ENCODE measurements at regions of chr14 and their contacts with region 1.

Region 1: GRCh38 chr14:74860906-74861733 is 14.8 kb downstream of the PROX2 start:
- DNase-seq: peak; percentile 74 to 82
- ATAC-seq: peak; percentile 81 to 92
- H3K4me3 ChIP-seq: no peak overlapping the region
- H3K27ac ChIP-seq: no peak overlapping the region
- H3K4me1 ChIP-seq: no peaks in the 10 kb centered on the region
- CTCF ChIP-seq: peak; percentile 87
- EP300 ChIP-seq: no peak
- POLR2A ChIP-seq: no peak
- RAD21 ChIP-seq: peak; percentile 82 to 91

Region 2: DNA sequence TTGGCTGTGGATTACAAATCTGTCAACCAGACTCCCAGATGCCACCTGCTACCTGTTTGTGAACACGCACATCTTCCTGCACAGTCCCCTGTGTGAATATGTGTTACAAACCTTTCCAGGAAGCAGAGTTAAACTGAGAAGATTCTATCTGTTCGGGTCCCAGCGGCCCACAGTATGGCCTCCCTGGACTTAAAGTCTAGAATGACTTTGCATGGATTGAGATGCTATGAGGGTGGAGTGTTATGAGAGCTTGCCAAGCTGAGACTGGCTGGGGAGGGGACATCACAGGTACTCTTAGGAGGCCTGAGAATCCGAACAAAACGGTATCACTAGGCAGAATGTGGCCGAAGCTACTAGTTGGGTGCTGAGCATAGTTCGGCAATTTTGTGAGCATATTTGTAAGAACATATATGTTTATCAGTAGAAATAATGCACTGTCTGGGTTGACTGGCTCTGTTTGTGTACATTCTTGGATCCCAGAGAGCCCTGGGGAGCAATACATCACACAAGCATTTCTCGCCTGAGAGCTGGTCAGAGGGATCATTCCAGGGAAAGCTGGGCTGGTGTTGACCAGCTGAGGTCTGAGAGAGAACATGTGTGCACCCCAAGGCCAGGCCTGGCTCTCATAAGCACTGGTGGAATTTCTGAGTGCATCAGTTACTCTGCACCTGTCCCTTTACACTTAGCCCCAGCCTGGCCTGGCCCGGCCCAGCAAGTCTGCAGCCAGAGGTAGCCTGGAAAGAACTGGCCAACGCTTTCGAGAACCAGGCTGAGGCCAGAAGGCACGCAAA is 219.3 kb before region 1 on chr14:
- CTCF ChIA-PET with region 1: no interaction called
- POLR2A ChIA-PET with region 1: no interaction called
- DNase-seq: no peak
- ATAC-seq: peak; percentile 10 to 33; a peak in 4 of 6 replicates
- H3K4me3 ChIP-seq: no peak overlapping the region
- H3K27ac ChIP-seq: no peak overlapping the region
- H3K4me1 ChIP-seq: no peaks in the 10 kb centered on the region
- CTCF ChIP-seq: no peak
- EP300 ChIP-seq: no peak
- POLR2A ChIP-seq: no peak
- RAD21 ChIP-seq: no peak

Region 3: GRCh38 chr14:74881431-74882361 is 20.6 kb after region 1 on chr14 and contains the start of gene DLST:
- CTCF ChIA-PET with region 1: interaction called, 339 read pairs
- POLR2A ChIA-PET with region 1: no interaction called
- DNase-seq: peak; percentile 90 to 92
- ATAC-seq: peak; percentile 98
- H3K4me3 ChIP-seq: peak within 1 kb of the TSS; percentile 100
- H3K27ac ChIP-seq: peak within 1 kb of the TSS; percentile 94 to 99
- H3K4me1 ChIP-seq: peaks cover 50% of the 10 kb centered on the region
- CTCF ChIP-seq: no peak
- EP300 ChIP-seq: no peak
- POLR2A ChIP-seq: no peak; the same call in none of the 2 replicates
- RAD21 ChIP-seq: no peak
- polyA plus RNA-seq, gene DLST: 129 and 137 TPM in 2 replicates

Region 4: GRCh38 chr14:74888164-74889158 is 27.3 kb after region 1 on chr14:
- CTCF ChIA-PET with region 1: interaction called, 339 read pairs
- POLR2A ChIA-PET with region 1: interaction called, 3 read pairs
- DNase-seq: peak in 1 of 2 experiments; percentile 37
- ATAC-seq: peak; percentile 50 to 82; a peak in 4 of 6 replicates
- H3K4me3 ChIP-seq: no peak overlapping the region
- H3K27ac ChIP-seq: peak overlapping the region; percentile 37 to 65; a peak in 5 of 6 replicates
- H3K4me1 ChIP-seq: peaks cover 51% of the 10 kb centered on the region
- CTCF ChIP-seq: no peak
- EP300 ChIP-seq: no peak
- POLR2A ChIP-seq: no peak
- RAD21 ChIP-seq: no peak

Region 5: DNA sequence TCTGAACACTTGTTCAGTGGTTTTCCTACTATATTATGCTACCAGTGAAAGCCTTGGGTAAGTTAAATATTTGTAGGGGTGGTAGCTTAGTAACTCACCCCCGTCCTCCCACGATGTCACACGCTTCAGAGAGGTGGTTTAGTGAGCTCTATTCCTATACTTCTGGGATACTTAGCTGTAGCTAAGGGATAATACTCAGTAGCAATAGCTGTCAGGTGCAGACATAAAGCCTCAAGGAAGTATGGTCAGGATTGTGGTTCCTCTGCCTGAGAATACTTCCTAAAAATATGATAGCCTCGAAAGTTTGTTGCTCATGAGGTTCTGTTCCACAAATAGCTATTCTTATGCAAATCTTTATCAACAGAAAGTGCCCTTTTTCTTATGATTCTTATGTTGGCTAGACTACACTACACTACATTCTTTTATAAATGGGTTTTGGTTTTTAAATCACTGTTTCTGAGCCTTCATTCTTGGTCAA is 32.5 kb after region 1 on chr14:
- CTCF ChIA-PET with region 1: interaction called, 36 read pairs
- POLR2A ChIA-PET with region 1: interaction called, 3 read pairs
- DNase-seq: no peak
- ATAC-seq: no peak
- H3K4me3 ChIP-seq: no peak overlapping the region
- H3K27ac ChIP-seq: no peak overlapping the region
- H3K4me1 ChIP-seq: peaks cover 3% of the 10 kb centered on the region
- CTCF ChIP-seq: no peak
- EP300 ChIP-seq: no peak
- POLR2A ChIP-seq: no peak
- RAD21 ChIP-seq: no peak

Region 6: GRCh38 chr14:74898694-74899093 is 37.6 kb after region 1 on chr14:
- CTCF ChIA-PET with region 1: interaction called, 226 read pairs
- POLR2A ChIA-PET with region 1: no interaction called
- DNase-seq: no peak
- ATAC-seq: no peak
- H3K4me3 ChIP-seq: no peak overlapping the region
- H3K27ac ChIP-seq: no peak overlapping the region
- H3K4me1 ChIP-seq: no peaks in the 10 kb centered on the region
- CTCF ChIP-seq: no peak
- EP300 ChIP-seq: no peak
- POLR2A ChIP-seq: no peak
- RAD21 ChIP-seq: no peak

Measured in A549 (cell line).